Dendritic cell treated with granulocyte-macrophage colony-stimulating factor and Interleukin-4, amounts not matched to agents 40 ng/mL and 50 ng/mL, for 4 days (primary cell): ENCODE measurements at regions of chr13 and their contacts with region 1.

Region 1: DNA sequence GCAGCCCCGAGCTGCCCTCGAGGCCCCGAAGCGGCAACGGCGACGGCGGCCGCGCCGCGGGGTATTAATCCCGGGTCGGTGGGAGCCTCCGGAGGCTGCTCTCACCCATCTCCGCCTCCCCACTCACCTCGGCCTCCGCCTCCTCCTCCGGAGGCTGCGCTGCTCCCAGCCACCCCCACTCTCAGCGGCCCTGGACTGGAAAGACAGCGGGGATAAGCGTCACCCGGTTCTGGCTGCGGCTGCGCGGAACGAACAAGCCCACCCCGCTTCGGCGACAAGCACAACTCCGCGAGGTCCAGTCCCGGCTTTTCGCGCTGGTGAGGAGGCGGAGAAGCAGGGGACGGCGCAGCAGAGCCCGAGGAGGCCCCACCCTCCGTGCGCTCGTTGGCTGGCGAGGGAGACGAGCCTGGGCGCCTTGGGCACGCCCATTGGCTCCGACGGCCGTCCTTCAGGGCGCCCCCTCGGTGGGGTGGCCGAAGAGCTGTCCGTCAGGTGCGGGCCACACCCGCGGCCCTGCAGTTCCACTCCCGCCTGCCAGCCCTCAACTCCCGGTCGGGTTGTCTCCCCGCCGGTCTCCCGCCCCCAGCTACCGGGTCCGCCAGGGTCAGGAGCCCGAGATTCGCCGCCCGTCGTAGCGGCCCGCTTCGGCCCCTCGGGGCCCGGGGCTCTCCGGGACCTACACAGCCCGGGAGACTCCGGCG is at the start of gene ZMYM5:
- H3K4me3 Mint-ChIP-seq: peak within 1 kb of the TSS; percentile 95
- H3K27ac Mint-ChIP-seq: peak within 1 kb of the TSS; percentile 99
- H3K4me1 Mint-ChIP-seq: peaks cover 27% of the 10 kb centered on the region
- H3K27me3 Mint-ChIP-seq: no peaks in the 10 kb centered on the region

Region 2: GRCh38 chr13:19633479-19634255 is 229.8 kb before region 1 on chr13 and contains the start of gene MPHOSPH8:
- intact Hi-C with region 1: loop called (anchors 5 kb)
- H3K4me3 Mint-ChIP-seq: peak within 1 kb of the TSS; percentile 99
- H3K27ac Mint-ChIP-seq: peak within 1 kb of the TSS; percentile 92
- H3K4me1 Mint-ChIP-seq: peaks cover 21% of the 10 kb centered on the region
- H3K27me3 Mint-ChIP-seq: peaks cover 4% of the 10 kb centered on the region

Region 3: GRCh38 chr13:19782049-19782726 is 81.3 kb before region 1 on chr13:
- intact Hi-C with region 1: loop called (anchors 2 kb)
- H3K4me3 Mint-ChIP-seq: peak overlapping the region; percentile 95
- H3K27ac Mint-ChIP-seq: peak overlapping the region; percentile 96
- H3K4me1 Mint-ChIP-seq: peaks cover 10% of the 10 kb centered on the region
- H3K27me3 Mint-ChIP-seq: no peaks in the 10 kb centered on the region

Region 4: DNA sequence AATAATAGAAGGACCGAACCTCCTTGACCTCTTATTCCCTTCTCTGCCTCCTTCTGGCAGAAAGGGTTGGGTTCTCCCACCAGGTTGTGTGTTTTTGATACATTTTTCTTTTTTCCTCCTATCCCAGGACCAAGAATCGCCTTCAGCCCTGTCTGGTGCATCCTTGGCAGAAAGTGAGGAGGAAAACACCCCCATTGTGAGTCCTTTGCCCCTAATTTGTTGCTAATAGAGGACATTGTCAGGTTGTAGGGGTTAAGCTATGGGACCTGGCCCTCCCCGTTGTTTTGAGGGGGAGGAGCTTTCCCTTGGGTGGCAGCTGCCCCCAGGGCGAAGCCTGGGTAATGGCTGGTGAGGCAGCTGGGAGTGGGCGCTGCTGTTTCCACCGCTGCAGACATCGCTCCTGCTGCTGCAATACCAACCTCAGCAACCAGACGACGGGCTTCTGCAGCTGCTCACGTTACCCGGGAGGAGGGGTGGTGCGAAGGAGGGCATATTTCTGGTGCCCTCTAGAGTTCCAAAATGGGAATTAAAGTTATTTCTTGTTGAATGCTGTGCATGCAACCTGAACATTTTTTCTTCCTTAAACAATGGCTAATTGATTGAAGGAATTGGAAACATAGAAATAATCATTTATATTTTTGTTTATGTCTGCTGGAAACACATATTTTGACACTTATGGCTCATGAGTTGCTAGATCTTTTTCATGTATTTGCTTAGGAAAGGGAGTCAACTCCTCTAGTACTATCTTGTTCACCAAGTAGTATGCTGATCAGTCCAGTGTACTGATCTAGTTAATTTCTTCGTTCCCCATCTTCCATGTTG is 96.6 kb after region 1 on chr13:
- intact Hi-C with region 1: loop called (anchors 2 kb)
- H3K4me3 Mint-ChIP-seq: peak overlapping the region; percentile 89
- H3K27ac Mint-ChIP-seq: peak overlapping the region; percentile 96
- H3K4me1 Mint-ChIP-seq: peaks cover 24% of the 10 kb centered on the region
- H3K27me3 Mint-ChIP-seq: no peaks in the 10 kb centered on the region